ENCODE measurements at regions of chr7 and their contacts with region 1.

Region 1: DNA sequence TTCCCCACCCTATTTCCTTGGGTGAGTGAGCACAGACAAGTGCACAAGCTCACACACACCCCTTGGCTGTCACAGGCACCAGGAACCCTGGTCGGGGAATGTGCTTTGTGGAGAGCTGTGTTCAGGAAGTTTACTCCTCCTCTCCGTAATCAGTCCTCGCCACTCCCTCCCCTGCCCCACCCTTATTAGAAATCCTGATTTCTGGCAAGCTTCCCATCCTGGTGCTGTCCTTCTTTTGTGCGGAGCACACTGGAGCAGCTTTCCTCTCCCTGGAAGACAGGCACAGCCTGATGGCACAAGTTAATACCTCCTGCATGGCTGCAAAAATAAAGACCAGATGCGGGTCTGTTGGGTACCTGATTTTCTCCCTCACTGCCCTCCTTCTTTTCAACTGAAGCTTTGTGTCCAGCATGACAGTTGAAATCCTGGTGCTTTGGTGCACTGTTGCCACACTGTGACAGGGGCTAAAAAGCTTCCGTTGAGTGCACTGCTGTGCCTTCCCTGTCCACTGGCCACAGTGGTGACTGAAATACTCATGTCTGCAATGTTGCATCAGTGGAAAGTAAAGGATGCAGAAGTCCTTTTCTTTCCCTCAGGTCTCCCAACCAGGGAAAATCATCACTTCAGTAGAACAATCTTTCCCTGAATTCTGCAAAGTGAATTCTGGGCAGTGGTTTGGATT is 55.0 kb downstream of the LRRC4 start:
- DNase-seq: no peak
- ATAC-seq: no peak
- H3K4me3 ChIP-seq: no peak overlapping the region
- H3K4me3 Mint-ChIP-seq: no peak overlapping the region
- H3K27ac ChIP-seq: no peak overlapping the region
- H3K27ac Mint-ChIP-seq: no peak overlapping the region
- H3K4me1 ChIP-seq: no peaks in the 10 kb centered on the region
- H3K4me1 Mint-ChIP-seq: peaks cover 0 to 21% (median 15%) of the 10 kb centered on the region in 7 donors
- H3K27me3 ChIP-seq: no peaks in the 10 kb centered on the region
- H3K27me3 Mint-ChIP-seq: no peaks in the 10 kb centered on the region

Region 2: GRCh38 chr7:127957889-127958288 is 18.3 kb before region 1 on chr7:
- CTCF ChIA-PET with region 1: no interaction called
- POLR2A ChIA-PET with region 1: no interaction called
- intact Hi-C with region 1: loop called in 1 of 2 experiments (anchors 1 kb)
- DNase-seq: no peak
- ATAC-seq: no peak
- H3K4me3 ChIP-seq: no peak overlapping the region
- H3K4me3 Mint-ChIP-seq: no peak overlapping the region
- H3K27ac ChIP-seq: no peak overlapping the region
- H3K27ac Mint-ChIP-seq: no peak overlapping the region
- H3K4me1 ChIP-seq: no peaks in the 10 kb centered on the region
- H3K4me1 Mint-ChIP-seq: peaks cover 0 to 10% (median 0%) of the 10 kb centered on the region in 7 donors
- H3K27me3 ChIP-seq: no peaks in the 10 kb centered on the region
- H3K27me3 Mint-ChIP-seq: no peaks in the 10 kb centered on the region

Measured in naive thymus-derived CD4-positive, alpha-beta T cell (primary cell).